SK-N-SH (cell line): ENCODE measurements at regions of chr2 and their contacts with region 1.

Region 1: GRCh38 chr2:44479122-44479887 is 117.6 kb downstream of the CAMKMT start:
- DNase-seq: peak; percentile 81
- H3K4me3 ChIP-seq: peak overlapping the region in 1 of 2 experiments; percentile 23; a peak in 1 of 4 replicates
- H3K27ac ChIP-seq: peak overlapping the region in 1 of 2 experiments; percentile 65; a peak in 2 of 4 replicates
- H3K4me1 ChIP-seq: peaks cover 0 to 12% of the 10 kb centered on the region in 2 experiments; a peak in 2 of 4 replicates
- H3K27me3 ChIP-seq: no peaks in the 10 kb centered on the region
- CTCF ChIP-seq: peak; percentile 100
- EP300 ChIP-seq: peak; percentile 15 to 49; a peak in 1 of 4 replicates
- RAD21 ChIP-seq: peak; percentile 100

Region 2: DNA sequence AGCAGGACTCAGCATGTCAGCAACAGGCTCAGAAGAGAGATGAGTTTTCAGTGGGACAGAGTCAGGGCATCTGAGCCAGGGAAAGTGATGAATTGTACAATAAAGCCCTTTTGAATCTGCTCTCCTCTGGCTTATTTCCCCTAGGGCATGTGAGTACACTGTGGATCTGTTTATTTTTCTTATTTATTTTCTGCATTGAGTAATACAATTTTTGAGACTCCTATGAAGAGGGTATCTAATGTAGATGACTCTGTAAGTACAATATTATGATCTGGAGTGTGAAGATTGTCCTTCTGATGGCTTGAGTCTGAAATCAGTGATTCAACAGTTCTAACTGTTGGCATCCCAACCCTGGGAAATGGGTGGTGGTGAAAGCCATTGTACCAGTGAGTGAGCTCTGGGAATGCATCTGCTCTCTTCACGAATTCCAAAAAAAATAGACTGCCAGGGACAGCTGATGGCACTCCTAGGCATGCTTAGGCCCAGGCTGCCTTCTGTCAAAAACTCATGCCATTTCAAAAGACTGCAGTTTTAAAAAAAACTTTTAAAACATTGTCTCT is 1735.8 kb before region 1 on chr2:
- CTCF ChIA-PET with region 1: no interaction called
- POLR2A ChIA-PET with region 1: no interaction called
- DNase-seq: no peak
- H3K4me3 ChIP-seq: no peak overlapping the region
- H3K27ac ChIP-seq: no peak overlapping the region
- H3K4me1 ChIP-seq: no peaks in the 10 kb centered on the region
- H3K27me3 ChIP-seq: no peaks in the 10 kb centered on the region
- CTCF ChIP-seq: no peak
- EP300 ChIP-seq: no peak
- RAD21 ChIP-seq: no peak

Region 3: GRCh38 chr2:44392338-44392943 is 86.9 kb before region 1 on chr2:
- CTCF ChIA-PET with region 1: interaction called, 278 read pairs
- POLR2A ChIA-PET with region 1: no interaction called
- DNase-seq: peak; percentile 41
- H3K4me3 ChIP-seq: peak overlapping the region in 1 of 2 experiments; percentile 24; a peak in 1 of 4 replicates
- H3K27ac ChIP-seq: no peak overlapping the region
- H3K4me1 ChIP-seq: peaks cover 0 to 4% of the 10 kb centered on the region in 2 experiments; a peak in 2 of 4 replicates
- H3K27me3 ChIP-seq: no peaks in the 10 kb centered on the region
- CTCF ChIP-seq: peak; percentile 91
- EP300 ChIP-seq: no peak
- RAD21 ChIP-seq: peak; percentile 86

Region 4: DNA sequence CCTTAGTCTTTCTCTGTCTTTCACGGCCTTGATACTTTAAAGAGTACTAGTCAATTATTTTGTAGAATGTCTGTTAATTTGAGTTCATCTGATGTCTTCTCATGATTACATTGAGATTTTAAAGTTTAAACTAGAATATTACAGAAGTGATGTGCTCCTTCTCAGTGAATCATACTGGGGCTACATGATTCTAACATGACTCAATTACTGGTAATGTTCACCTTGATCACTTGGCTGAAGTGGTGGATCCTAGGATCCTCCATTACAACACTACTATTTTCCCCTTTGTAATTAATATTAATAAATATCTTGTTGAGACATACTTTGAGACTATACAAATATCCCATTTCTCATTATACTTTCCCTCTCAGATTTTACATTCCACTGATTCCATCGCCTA is 30.9 kb after region 1 on chr2:
- CTCF ChIA-PET with region 1: interaction called, 31 read pairs
- POLR2A ChIA-PET with region 1: no interaction called
- DNase-seq: no peak
- H3K4me3 ChIP-seq: no peak overlapping the region
- H3K27ac ChIP-seq: no peak overlapping the region
- H3K4me1 ChIP-seq: peaks cover 0 to 4% of the 10 kb centered on the region in 2 experiments; a peak in 2 of 4 replicates
- H3K27me3 ChIP-seq: no peaks in the 10 kb centered on the region
- CTCF ChIP-seq: no peak
- EP300 ChIP-seq: no peak
- RAD21 ChIP-seq: no peak

Region 5: GRCh38 chr2:44623622-44624351 is 144.5 kb after region 1 on chr2:
- CTCF ChIA-PET with region 1: interaction called, 10 read pairs
- POLR2A ChIA-PET with region 1: no interaction called
- DNase-seq: no peak
- H3K4me3 ChIP-seq: no peak overlapping the region
- H3K27ac ChIP-seq: no peak overlapping the region
- H3K4me1 ChIP-seq: no peaks in the 10 kb centered on the region
- H3K27me3 ChIP-seq: no peaks in the 10 kb centered on the region
- CTCF ChIP-seq: peak; percentile 37; the same call in 1 of the 2 replicates
- EP300 ChIP-seq: no peak
- RAD21 ChIP-seq: no peak

Region 6: GRCh38 chr2:44715671-44716081 is 236.4 kb after region 1 on chr2:
- CTCF ChIA-PET with region 1: interaction called, 75 read pairs
- POLR2A ChIA-PET with region 1: no interaction called
- DNase-seq: peak; percentile 46
- H3K4me3 ChIP-seq: no peak overlapping the region
- H3K27ac ChIP-seq: peak overlapping the region in 1 of 2 experiments; percentile 31; a peak in 2 of 4 replicates
- H3K4me1 ChIP-seq: peaks cover 0 to 22% of the 10 kb centered on the region in 2 experiments; a peak in 2 of 4 replicates
- H3K27me3 ChIP-seq: no peaks in the 10 kb centered on the region
- CTCF ChIP-seq: peak; percentile 63
- EP300 ChIP-seq: 0 out of 4 replicates have a peak, but pooled peaks of 1 of the 2 experiments have one; percentile 36
- RAD21 ChIP-seq: peak; percentile 95

Region 7: DNA sequence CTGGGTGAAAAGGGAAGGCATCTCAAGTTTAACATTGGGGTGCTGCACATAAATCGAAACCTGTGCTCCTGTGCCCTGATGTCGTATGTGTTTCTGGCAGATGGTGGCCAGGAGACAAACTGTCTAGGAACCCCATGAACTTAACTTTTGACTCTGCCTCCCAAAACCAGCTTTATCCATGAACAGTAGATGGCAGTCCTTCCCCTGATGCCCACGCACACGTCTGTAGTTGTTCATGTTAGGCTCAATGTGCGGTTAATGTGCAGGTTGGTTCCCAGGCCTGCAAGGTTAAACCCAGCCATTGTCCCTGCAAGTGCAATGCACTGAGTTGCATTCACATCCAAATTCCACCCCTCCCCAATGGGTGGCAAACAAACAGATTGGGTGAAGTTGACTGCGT is 418.1 kb after region 1 on chr2:
- CTCF ChIA-PET with region 1: interaction called, 12 read pairs
- POLR2A ChIA-PET with region 1: no interaction called
- DNase-seq: no peak
- H3K4me3 ChIP-seq: no peak overlapping the region
- H3K27ac ChIP-seq: no peak overlapping the region
- H3K4me1 ChIP-seq: peaks cover 0 to 8% of the 10 kb centered on the region in 2 experiments; a peak in 2 of 4 replicates
- H3K27me3 ChIP-seq: 0 out of 2 replicates have a peak, but pooled peaks cover 19% of the 10 kb centered on the region
- CTCF ChIP-seq: peak; percentile 14
- EP300 ChIP-seq: no peak
- RAD21 ChIP-seq: peak; percentile 58